ENCODE measurements at regions of chr19 and their contacts with region 1.

Region 1: GRCh38 chr19:5790573-5791520 is at the start of gene DUS3L:
- DNase-seq: peak; percentile 98
- ATAC-seq: peak; percentile 97
- H3K4me3 Mint-ChIP-seq: peak within 1 kb of the TSS; percentile 98
- H3K27ac Mint-ChIP-seq: peak within 1 kb of the TSS; percentile 100
- H3K4me1 Mint-ChIP-seq: peaks cover 13% of the 10 kb centered on the region
- H3K27me3 Mint-ChIP-seq: no peaks in the 10 kb centered on the region
- total RNA-seq, gene DUS3L: 59.4 to 63.9 TPM

Region 2: DNA sequence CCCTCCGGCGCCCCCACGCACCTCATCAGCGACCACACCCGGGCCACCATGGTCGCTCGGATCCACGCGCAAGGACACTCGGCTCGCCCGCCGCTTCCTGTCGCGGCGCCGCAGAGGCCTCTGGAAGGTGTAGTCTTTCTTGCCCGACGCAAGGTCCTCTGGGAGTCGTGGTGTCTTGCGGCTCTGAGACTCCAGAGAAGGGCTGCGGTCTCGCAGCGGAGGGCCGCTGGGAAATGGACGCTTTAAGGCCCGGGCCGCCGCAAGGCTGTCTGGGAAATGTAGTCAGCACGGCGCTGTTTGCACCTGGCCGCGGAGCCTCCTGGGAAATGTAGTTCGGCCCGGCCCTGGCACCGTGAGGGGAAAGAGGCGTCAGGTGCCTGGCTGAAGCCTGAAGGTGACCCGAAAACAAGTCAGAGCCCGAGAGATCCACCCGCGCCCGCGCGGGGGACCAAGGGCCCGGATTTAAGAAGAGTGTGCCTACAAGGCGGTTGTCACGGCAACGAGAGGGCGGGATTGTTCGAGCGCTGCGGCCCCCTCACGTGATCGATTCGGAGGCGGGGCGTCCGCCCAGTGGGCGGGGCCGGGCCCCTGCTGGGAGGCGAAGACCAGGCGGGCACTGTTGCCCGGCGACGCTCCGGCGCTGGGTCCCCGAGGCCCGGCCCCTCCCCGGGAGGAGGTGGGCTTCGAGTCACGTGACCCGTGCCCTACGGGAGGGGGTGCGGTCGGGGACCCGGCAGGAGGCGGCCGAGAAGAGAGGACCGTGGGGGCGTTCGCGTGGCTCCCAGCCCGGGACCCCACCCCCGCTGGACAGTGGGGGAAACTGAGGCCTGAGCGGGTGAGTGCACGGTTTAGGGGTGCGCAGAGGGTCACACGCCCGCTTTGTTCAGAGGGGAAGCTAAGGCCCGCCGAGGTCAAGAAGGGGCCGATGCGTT is 110.1 kb before region 1 on chr19 and contains the starts of genes HSD11B1L and MICOS13:
- CTCF ChIA-PET with region 1: no interaction called
- POLR2A ChIA-PET with region 1: no interaction called
- intact Hi-C with region 1: loop called (anchors 1 to 2 kb)
- DNase-seq: peak; percentile 99
- ATAC-seq: peak; percentile 97
- H3K4me3 Mint-ChIP-seq: peak within 1 kb of the TSS; percentile 99
- H3K27ac Mint-ChIP-seq: peak within 1 kb of the TSS; percentile 94
- H3K4me1 Mint-ChIP-seq: peaks cover 20% of the 10 kb centered on the region
- H3K27me3 Mint-ChIP-seq: no peaks in the 10 kb centered on the region
- total RNA-seq, gene HSD11B1L: 2.0 to 3.2 TPM
- total RNA-seq, gene MICOS13: 50.9 to 52.1 TPM

Region 3: GRCh38 chr19:5803752-5804515 is 13.1 kb after region 1 on chr19:
- CTCF ChIA-PET with region 1: interaction called, 37 read pairs
- POLR2A ChIA-PET with region 1: interaction called, 3 read pairs
- intact Hi-C with region 1: loop called (anchors 1 kb)
- DNase-seq: peak; percentile 98
- ATAC-seq: peak; percentile 97
- H3K4me3 Mint-ChIP-seq: peak overlapping the region; percentile 63
- H3K27ac Mint-ChIP-seq: peak overlapping the region; percentile 47
- H3K4me1 Mint-ChIP-seq: peaks cover 21% of the 10 kb centered on the region
- H3K27me3 Mint-ChIP-seq: peaks cover 20% of the 10 kb centered on the region

Region 4: GRCh38 chr19:5953680-5954213 is 162.9 kb after region 1 on chr19:
- CTCF ChIA-PET with region 1: no interaction called
- POLR2A ChIA-PET with region 1: no interaction called
- intact Hi-C with region 1: loop called in 1 of 2 experiments (anchors 1 kb)
- DNase-seq: peak; percentile 72
- ATAC-seq: peak; percentile 35
- H3K4me3 Mint-ChIP-seq: peak overlapping the region; percentile 53
- H3K27ac Mint-ChIP-seq: peak overlapping the region; percentile 98
- H3K4me1 Mint-ChIP-seq: peaks cover 93% of the 10 kb centered on the region
- H3K27me3 Mint-ChIP-seq: no peaks in the 10 kb centered on the region

Region 5: DNA sequence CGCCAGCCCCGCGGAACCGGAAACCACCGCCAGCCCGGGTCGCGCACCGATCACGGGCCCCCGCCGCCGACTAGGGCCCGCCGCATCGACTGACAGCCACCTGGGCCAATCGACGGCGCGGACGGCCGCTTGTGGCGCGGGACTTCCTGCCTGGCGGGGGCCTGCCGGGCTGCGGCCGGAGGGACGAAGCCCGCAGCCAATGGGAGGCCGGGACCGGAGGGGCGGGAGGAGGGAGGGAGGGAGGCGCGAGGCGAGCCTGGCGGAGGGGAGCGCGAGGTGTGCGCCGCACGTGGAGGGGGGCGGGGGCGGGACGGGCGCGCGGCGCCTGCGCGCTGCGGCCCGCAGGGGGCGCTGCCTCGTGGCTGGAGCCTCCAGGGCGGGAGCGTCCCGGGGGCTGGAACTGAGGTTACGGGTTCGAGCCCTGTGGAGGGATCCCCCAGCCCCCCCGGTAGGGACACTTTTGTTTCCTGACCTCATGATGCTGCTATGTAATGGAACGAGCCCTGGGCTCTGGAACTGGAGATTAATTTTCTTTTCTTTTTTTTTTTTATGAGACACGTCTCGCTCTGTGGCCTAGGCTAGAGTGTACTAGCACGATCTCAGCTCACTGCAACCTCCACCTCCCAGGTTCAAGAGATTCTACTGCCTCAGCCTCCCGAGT is 489.2 kb after region 1 on chr19 and contains the start of gene MLLT1:
- CTCF ChIA-PET with region 1: no interaction called
- POLR2A ChIA-PET with region 1: no interaction called
- intact Hi-C with region 1: loop called in 1 of 2 experiments (anchors 2 kb)
- DNase-seq: peak; percentile 98
- ATAC-seq: peak; percentile 98
- H3K4me3 Mint-ChIP-seq: peak within 1 kb of the TSS; percentile 98
- H3K27ac Mint-ChIP-seq: peak within 1 kb of the TSS; percentile 93
- H3K4me1 Mint-ChIP-seq: peaks cover 38% of the 10 kb centered on the region
- H3K27me3 Mint-ChIP-seq: peaks cover 2% of the 10 kb centered on the region
- total RNA-seq, gene MLLT1: 45.0 to 46.6 TPM

Region 6: DNA sequence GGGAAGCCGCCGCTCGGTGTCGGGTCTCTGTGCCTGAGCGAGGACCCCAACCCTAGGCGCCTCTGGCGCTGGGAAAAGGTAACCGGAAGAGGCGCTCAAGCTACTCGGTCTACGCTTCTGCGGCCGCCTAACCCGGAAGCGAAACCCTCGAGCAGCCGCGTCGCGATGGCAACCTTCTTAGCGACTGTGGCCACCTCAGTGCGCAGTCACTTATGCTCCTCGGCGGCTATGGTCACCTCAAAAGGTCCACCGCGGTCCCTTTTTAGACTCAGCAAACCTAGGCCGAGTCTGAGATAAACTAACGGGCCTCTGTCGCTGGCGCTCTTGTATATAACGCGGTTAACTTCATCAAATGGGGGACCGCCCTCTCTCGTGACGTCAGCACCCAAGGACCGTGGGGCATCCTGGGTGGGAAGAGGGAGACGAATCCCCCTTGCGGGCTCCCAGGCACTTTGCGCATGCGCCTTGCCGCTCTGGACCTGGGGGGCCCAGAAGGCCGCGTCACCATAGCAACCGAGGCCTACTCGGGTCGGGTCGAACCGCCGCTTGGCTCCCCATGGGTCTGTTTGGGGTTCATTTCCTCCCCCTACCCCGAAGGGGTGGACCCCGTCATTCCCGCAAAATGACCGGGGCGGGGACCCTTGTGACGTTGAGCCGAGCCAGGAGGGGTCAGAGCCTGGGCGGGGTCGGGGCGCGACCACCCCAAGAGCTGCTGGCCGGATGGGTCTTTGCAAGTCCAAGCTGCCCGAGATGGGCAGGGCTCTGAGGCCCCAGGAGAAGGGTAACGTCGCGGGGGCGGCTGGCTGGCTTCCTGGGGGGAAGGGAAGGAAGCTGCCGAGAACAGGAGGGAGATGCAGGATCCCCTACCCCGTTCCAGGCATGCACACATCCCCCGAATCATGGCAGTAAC is 602.5 kb after region 1 on chr19 and contains the start of gene GTF2F1:
- CTCF ChIA-PET with region 1: no interaction called
- POLR2A ChIA-PET with region 1: no interaction called
- intact Hi-C with region 1: loop called in 1 of 2 experiments (anchors 2 kb)
- DNase-seq: peak; percentile 96
- ATAC-seq: peak; percentile 89
- H3K4me3 Mint-ChIP-seq: peak within 1 kb of the TSS; percentile 85
- H3K27ac Mint-ChIP-seq: peak within 1 kb of the TSS; percentile 91
- H3K4me1 Mint-ChIP-seq: peaks cover 22% of the 10 kb centered on the region
- H3K27me3 Mint-ChIP-seq: no peaks in the 10 kb centered on the region
- total RNA-seq, gene GTF2F1: 60.9 to 78.5 TPM

Measured in activated CD4-positive, alpha-beta T cell treated with anti-CD3 and anti-CD28 coated beads for 36 hours (primary cell).